Mammary epithelial cell (primary cell): ENCODE measurements at regions of chr2 and their contacts with region 1.

Region 1: DNA sequence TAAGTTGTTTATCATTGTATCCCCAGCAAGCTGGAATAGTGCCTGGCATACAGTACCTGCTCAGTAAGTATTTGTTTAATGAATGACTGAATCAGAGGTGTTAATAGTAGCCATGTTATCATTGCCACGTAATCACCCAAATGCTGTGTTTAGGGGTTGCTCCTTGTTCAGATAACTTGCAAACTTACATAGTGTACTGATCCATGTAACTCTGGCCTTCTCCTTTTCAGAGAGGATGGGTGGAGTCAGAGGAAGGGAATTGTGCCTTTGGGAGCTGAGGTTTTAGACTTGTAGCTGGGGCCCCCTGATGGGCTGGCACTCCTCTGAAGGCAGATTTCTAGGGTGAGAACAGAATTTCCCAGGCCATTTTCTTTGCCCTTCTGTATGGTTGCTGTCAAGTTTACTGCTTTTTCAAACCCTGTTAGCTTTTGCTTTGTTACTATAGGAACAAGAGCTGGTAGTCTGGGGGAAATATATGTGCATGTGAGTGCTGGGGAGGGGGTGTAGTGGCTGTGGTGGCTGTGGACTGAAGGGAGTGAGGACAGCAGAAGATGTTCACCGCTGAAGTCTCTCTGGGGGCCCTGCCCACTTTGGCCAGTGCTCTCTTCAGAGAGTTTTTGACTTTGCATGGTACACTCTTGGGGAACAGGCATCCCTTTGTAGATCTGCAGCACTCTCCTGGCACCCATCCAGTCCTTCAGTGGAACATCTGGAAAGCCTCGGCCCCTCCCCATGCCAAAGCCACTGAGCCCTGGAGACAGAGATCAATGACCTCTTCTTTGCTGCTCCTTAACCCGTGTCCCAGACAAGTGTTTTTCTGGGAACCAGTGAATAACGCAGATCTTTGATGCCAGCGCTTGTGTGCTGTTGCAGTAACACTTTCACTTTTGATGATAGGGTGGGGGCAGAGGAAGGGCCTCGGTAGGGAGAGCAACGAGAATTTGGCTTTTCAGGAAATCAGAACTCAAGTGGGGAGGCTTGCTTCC is 209.0 kb downstream of the PRKCE start:
- DNase-seq: peak; percentile 25
- H3K4me3 ChIP-seq: peak overlapping the region in 2 of 3 experiments; percentile 10 to 11
- H3K27ac ChIP-seq: no peak overlapping the region
- H3K4me1 ChIP-seq: no peaks in the 10 kb centered on the region
- H3K27me3 ChIP-seq: no peaks in the 10 kb centered on the region
- CTCF ChIP-seq: peak in 1 of 2 donors; percentile 13

Region 2: GRCh38 chr2:45874344-45874743 is 13.9 kb after region 1 on chr2:
- CTCF ChIA-PET with region 1: no interaction called
- dilution Hi-C with region 1: no loop called
- in situ Hi-C with region 1: no loop called
- intact Hi-C with region 1: no loop called
- DNase-seq: no peak
- H3K4me3 ChIP-seq: no peak overlapping the region
- H3K27ac ChIP-seq: no peak overlapping the region
- H3K4me1 ChIP-seq: no peaks in the 10 kb centered on the region
- H3K27me3 ChIP-seq: no peaks in the 10 kb centered on the region
- CTCF ChIP-seq: no peak

Region 3: DNA sequence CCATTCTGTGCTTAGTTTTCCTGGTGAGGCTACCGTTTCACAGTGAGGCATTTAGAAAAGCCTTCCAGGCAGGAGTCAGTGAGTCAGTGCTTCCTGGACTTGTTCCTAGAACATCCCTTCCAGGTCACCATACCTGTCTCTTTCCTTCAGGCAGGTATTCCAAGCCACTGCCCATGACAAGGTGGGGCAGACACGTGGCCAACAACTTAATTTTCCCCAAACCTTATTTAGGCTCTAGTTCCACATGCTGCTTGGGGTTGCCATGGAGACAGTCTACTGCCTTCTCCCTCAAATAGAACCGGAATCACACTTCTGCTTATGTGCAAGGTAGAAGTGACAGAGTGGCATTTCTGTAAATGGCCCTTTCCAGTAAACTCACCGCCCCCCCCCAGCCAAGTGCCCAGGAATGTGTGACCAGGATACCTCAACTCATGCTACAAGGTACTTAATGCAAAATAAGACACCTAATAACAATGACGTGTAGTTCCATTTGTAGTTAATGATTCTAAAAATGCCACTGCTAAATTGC is 49.3 kb after region 1 on chr2:
- CTCF ChIA-PET with region 1: no interaction called
- dilution Hi-C with region 1: loop called (anchors 5 kb)
- in situ Hi-C with region 1: no loop called
- intact Hi-C with region 1: no loop called
- DNase-seq: peak; percentile 82
- H3K4me3 ChIP-seq: no peak overlapping the region
- H3K27ac ChIP-seq: peak overlapping the region; percentile 63
- H3K4me1 ChIP-seq: peaks cover 31% of the 10 kb centered on the region
- H3K27me3 ChIP-seq: no peaks in the 10 kb centered on the region
- CTCF ChIP-seq: no peak